ENCODE measurements at regions of chr3 and their contacts with region 1.

Region 1: GRCh38 chr3:176939022-176939817 is 258.1 kb downstream of the TBL1XR1 start:
- DNase-seq: peak; percentile 80
- H3K4me3 ChIP-seq: peak overlapping the region in 1 of 3 experiments; percentile 21
- H3K27ac ChIP-seq: no peak overlapping the region
- H3K4me1 ChIP-seq: no peaks in the 10 kb centered on the region
- H3K27me3 ChIP-seq: no peaks in the 10 kb centered on the region
- CTCF ChIP-seq: peak; percentile 71 to 72
- POLR2A ChIP-seq: no peak

Region 2: DNA sequence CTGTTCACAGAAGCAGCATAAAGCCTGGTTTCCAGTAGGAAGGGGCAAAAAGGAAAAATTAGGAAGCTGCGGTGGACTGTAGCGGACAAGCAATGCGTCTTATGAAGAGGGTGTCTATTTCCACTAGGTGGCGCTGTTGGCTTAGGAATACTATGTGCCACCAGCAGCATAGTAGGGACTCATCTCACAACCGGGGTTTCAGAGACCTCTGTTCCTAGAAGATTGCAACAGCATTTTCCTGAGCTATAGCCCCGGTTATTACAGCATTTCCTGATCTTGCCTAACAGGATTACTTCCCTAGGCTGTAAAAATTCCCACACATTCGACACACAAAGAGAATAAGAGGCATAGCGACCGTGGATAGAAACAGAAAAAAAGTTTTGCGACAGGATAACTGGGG is 424.9 kb before region 1 on chr3:
- CTCF ChIA-PET with region 1: interaction called, 18 read pairs
- POLR2A ChIA-PET with region 1: no interaction called
- dilution Hi-C with region 1: no loop called
- intact Hi-C with region 1: loop called (anchors 1 kb)
- DNase-seq: peak; percentile 73
- H3K4me3 ChIP-seq: no peak overlapping the region
- H3K27ac ChIP-seq: no peak overlapping the region
- H3K4me1 ChIP-seq: no peaks in the 10 kb centered on the region
- H3K27me3 ChIP-seq: no peaks in the 10 kb centered on the region
- CTCF ChIP-seq: peak; percentile 34 to 41
- POLR2A ChIP-seq: no peak

Region 3: DNA sequence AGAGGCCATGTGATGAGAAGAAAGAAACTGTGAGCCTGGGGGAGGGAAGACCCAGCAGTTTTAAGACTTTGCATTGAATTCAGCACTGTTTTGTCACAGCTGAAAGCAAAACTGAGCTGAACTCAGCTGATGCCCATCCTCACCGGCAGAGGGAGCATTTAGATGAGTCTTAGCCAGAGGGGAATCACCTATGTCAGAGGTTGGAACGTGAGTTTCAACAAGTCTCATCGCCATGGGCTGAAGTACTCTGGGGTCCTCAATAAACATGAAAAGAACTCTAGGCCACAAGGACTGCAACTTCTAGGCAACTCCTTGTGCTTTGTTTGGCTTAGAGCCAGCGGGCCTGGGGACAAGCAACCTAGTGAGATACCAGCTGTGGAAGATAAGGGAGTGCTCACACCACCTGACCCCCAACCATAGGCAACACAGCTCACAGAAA is 66.4 kb before region 1 on chr3:
- CTCF ChIA-PET with region 1: interaction called, 119 read pairs
- POLR2A ChIA-PET with region 1: no interaction called
- dilution Hi-C with region 1: no loop called
- intact Hi-C with region 1: loop called (anchors 1 kb)
- DNase-seq: peak; percentile 61
- H3K4me3 ChIP-seq: no peak overlapping the region
- H3K27ac ChIP-seq: no peak overlapping the region
- H3K4me1 ChIP-seq: no peaks in the 10 kb centered on the region
- H3K27me3 ChIP-seq: no peaks in the 10 kb centered on the region
- CTCF ChIP-seq: peak; percentile 79 to 81
- POLR2A ChIP-seq: no peak

Region 4: GRCh38 chr3:176927706-176928581 is 11.3 kb before region 1 on chr3:
- CTCF ChIA-PET with region 1: interaction called, 22 read pairs
- POLR2A ChIA-PET with region 1: no interaction called
- dilution Hi-C with region 1: no loop called
- intact Hi-C with region 1: no loop called
- DNase-seq: no peak
- H3K4me3 ChIP-seq: no peak overlapping the region
- H3K27ac ChIP-seq: no peak overlapping the region
- H3K4me1 ChIP-seq: no peaks in the 10 kb centered on the region
- H3K27me3 ChIP-seq: peaks cover 2 to 6% of the 10 kb centered on the region in 2 experiments
- CTCF ChIP-seq: no peak
- POLR2A ChIP-seq: no peak

Region 5: GRCh38 chr3:177041021-177041729 is 102.0 kb after region 1 on chr3:
- CTCF ChIA-PET with region 1: no interaction called
- POLR2A ChIA-PET with region 1: no interaction called
- dilution Hi-C with region 1: no loop called
- intact Hi-C with region 1: no loop called
- DNase-seq: peak; percentile 43
- H3K4me3 ChIP-seq: no peak overlapping the region
- H3K27ac ChIP-seq: no peak overlapping the region
- H3K4me1 ChIP-seq: no peaks in the 10 kb centered on the region
- H3K27me3 ChIP-seq: no peaks in the 10 kb centered on the region
- CTCF ChIP-seq: no peak
- POLR2A ChIP-seq: no peak

Measured in endothelial cell of umbilical vein (primary cell).